Caco-2 (cell line): ENCODE measurements at regions of chr20 and their contacts with region 1.

Region 1: DNA sequence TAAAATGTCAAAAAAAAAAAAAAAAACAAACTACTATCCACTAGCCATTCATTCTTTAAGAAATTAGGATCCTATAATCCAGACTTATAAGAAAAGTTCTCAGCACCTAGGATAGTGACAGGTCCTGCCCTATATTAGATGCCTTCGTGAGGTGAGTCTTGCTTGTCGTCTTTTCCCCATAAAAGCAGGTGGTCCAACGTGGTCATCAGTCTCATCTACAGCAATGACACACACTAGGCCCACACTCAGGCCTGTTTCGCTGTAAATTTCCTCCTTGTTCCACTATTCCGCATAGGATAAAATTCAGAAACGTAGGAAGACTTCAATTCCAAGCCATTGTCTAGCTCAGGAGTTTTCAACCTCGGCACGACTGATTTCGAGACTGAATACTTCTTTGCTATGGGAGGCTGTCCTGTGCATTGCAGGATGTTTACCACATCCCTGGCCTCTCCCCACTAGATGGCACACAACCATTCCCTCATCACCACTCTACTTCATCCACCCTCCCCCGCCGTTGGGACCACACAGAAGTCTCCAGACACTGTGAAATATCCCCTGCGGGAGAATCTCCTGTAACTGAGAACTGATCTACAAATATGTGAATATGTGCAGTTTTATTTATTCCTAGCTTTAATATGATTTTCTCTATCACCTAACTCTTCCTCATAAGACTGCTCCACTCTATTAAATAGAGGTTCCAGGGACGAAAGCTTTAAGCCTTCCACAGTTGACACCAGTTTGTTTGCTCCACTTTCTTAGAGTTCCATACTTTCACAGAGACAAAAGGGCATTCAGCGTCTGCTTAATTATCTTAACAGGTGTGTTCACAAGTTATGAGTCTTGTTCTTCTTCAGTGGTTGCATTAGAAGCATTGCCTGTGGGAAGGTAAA is 346.3 kb downstream of the BMP2 start:
- DNase-seq: peak; percentile 75 to 78
- H3K4me3 ChIP-seq: no peak overlapping the region
- H3K4me3 Mint-ChIP-seq: peak overlapping the region; percentile 47
- H3K27ac Mint-ChIP-seq: no peak overlapping the region
- H3K4me1 ChIP-seq: peaks cover 7% of the 10 kb centered on the region; the same call in 1 of the 2 replicates
- H3K4me1 Mint-ChIP-seq: peaks cover 10% of the 10 kb centered on the region
- H3K27me3 ChIP-seq: no peaks in the 10 kb centered on the region
- H3K27me3 Mint-ChIP-seq: no peaks in the 10 kb centered on the region
- CTCF ChIP-seq: peak; percentile 73 to 89

Region 2: GRCh38 chr20:6956574-6956973 is 157.2 kb before region 1 on chr20:
- CTCF ChIA-PET with region 1: no interaction called
- POLR2A ChIA-PET with region 1: no interaction called
- intact Hi-C with region 1: no loop called
- DNase-seq: no peak
- H3K4me3 ChIP-seq: no peak overlapping the region
- H3K4me3 Mint-ChIP-seq: no peak overlapping the region
- H3K27ac Mint-ChIP-seq: no peak overlapping the region
- H3K4me1 ChIP-seq: peaks cover 17% of the 10 kb centered on the region
- H3K4me1 Mint-ChIP-seq: peaks cover 15% of the 10 kb centered on the region
- H3K27me3 ChIP-seq: no peaks in the 10 kb centered on the region
- H3K27me3 Mint-ChIP-seq: no peaks in the 10 kb centered on the region
- CTCF ChIP-seq: no peak

Region 3: DNA sequence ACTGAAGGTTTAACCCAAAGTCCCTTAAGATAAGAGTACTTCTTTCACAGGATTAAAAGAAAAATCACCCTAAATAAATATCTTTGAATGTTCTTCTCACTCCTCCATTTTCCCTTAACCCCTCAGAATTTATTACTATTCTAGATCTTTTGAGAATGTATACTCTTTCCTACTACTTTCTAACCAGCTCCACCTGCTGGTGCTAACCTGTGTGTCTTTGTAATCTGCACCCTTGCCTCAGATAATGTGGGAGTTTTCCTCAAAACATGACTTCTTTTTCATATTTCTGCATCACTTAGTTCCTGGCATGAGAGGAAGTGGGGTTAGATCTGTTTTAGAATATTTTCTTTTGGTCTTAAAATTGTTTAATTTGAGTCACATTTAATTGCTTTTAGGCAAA is 47.9 kb after region 1 on chr20:
- CTCF ChIA-PET with region 1: interaction called, 5 read pairs
- POLR2A ChIA-PET with region 1: no interaction called
- intact Hi-C with region 1: loop called (anchors 2 kb)
- DNase-seq: peak; percentile 48 to 53
- H3K4me3 ChIP-seq: no peak overlapping the region
- H3K4me3 Mint-ChIP-seq: no peak overlapping the region
- H3K27ac Mint-ChIP-seq: no peak overlapping the region
- H3K4me1 ChIP-seq: 0 out of 2 replicates have a peak, but pooled peaks cover 7% of the 10 kb centered on the region
- H3K4me1 Mint-ChIP-seq: peaks cover 17% of the 10 kb centered on the region
- H3K27me3 ChIP-seq: no peaks in the 10 kb centered on the region
- H3K27me3 Mint-ChIP-seq: no peaks in the 10 kb centered on the region
- CTCF ChIP-seq: peak; percentile 58 to 80

Region 4: DNA sequence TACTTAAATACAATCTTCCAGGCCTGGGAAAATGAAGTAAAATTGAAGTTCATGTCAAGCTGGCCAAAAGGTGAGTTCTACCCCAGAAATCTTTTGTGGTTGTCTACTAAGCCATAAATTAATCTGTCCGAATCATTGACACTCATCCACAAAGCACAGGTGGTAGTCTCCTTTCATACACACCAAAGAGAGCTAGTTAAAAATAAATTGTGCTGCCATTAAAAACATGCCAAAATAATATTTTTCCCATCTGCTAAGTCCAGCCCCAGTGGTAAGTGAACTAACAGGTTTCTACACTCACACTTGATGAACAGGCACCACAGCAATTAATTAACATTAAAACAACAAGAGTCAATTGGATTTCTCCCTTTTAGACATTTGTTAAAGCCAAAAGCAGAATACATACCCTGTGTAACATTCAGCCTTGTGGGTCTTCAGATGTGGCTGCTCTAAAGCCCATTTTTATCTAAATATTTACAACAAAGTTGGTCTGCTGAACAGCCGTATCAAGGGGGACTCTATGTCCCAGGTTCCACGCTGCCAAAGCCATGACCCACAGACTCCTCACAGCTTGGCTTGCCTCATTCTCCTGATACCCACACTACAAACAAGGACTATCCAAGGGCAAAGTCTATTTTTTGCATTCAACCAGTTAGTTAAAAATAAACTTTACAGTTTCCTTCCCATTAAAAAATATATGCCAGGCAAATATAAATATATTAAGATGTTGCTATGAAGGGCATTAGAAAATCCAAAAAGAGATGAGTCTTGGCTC is 144.1 kb after region 1 on chr20:
- CTCF ChIA-PET with region 1: no interaction called
- POLR2A ChIA-PET with region 1: no interaction called
- intact Hi-C with region 1: no loop called
- DNase-seq: no peak
- H3K4me3 ChIP-seq: no peak overlapping the region
- H3K4me3 Mint-ChIP-seq: no peak overlapping the region
- H3K27ac Mint-ChIP-seq: no peak overlapping the region
- H3K4me1 ChIP-seq: peaks cover 36% of the 10 kb centered on the region
- H3K4me1 Mint-ChIP-seq: peaks cover 20% of the 10 kb centered on the region
- H3K27me3 ChIP-seq: no peaks in the 10 kb centered on the region
- H3K27me3 Mint-ChIP-seq: no peaks in the 10 kb centered on the region
- CTCF ChIP-seq: no peak

Region 5: GRCh38 chr20:7272512-7272911 is 158.7 kb after region 1 on chr20:
- CTCF ChIA-PET with region 1: interaction called, 7 read pairs
- POLR2A ChIA-PET with region 1: no interaction called
- intact Hi-C with region 1: loop called (anchors 2 kb)
- DNase-seq: peak in 1 of 2 experiments; percentile 38
- H3K4me3 ChIP-seq: no peak overlapping the region
- H3K4me3 Mint-ChIP-seq: no peak overlapping the region
- H3K27ac Mint-ChIP-seq: no peak overlapping the region
- H3K4me1 ChIP-seq: no peaks in the 10 kb centered on the region
- H3K4me1 Mint-ChIP-seq: no peaks in the 10 kb centered on the region
- H3K27me3 ChIP-seq: no peaks in the 10 kb centered on the region
- H3K27me3 Mint-ChIP-seq: no peaks in the 10 kb centered on the region
- CTCF ChIP-seq: peak; percentile 47 to 69

Region 6: DNA sequence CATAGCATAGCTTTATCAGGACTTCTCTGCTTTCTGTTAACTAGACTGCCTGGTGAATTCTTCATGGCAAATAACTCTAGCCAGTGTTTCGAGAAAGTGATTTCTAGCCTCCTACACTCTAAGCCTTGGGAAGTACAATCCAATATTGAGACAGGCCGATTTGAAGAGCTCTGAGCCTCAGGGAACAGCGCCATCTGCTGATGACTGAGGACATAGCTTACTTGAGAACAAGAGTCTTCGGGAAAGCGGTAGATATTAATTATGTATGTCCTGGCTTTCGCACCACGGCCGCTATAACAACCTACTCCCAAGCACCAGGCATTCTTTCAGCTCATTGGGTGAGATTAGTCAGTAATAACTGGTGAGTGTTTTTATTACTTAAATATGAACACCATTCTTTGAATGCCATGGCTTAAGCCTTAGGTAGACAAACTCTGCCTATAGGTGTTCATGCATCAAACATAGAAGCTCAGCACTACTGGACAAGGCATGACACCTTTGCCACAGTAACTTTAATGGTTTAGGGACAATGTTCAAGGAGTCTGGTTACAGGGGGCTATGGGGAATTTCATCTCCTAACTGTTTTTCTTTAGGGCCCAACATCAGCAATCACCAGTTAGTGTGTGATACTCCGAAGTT is 172.2 kb after region 1 on chr20:
- CTCF ChIA-PET with region 1: interaction called, 12 read pairs
- POLR2A ChIA-PET with region 1: no interaction called
- intact Hi-C with region 1: loop called (anchors 2 kb)
- DNase-seq: peak; percentile 75 to 77
- H3K4me3 ChIP-seq: no peak overlapping the region
- H3K4me3 Mint-ChIP-seq: no peak overlapping the region
- H3K27ac Mint-ChIP-seq: no peak overlapping the region
- H3K4me1 ChIP-seq: 0 out of 2 replicates have a peak, but pooled peaks cover under 1% of the 10 kb centered on the region
- H3K4me1 Mint-ChIP-seq: no peaks in the 10 kb centered on the region
- H3K27me3 ChIP-seq: no peaks in the 10 kb centered on the region
- H3K27me3 Mint-ChIP-seq: no peaks in the 10 kb centered on the region
- CTCF ChIP-seq: peak; percentile 78 to 94

Region 7: DNA sequence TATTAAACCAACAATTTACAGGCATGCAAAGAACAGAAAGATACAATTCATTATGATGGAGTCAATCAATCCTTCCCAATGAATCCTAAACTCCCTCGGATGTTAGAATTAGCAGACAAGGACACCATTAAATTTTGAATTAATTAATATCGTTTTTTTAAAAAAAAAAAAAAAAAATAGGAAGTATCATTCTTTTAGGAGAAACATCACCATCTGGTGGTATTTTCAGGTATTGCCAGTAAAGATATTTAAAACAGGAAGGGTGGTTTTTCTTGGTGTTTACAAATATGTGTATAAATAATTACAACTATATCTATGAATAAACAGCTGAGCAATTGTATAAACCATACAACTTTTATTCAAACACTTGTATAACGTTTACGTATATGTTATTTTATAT is 262.1 kb after region 1 on chr20:
- CTCF ChIA-PET with region 1: no interaction called
- POLR2A ChIA-PET with region 1: no interaction called
- intact Hi-C with region 1: loop called (anchors 2 kb)
- DNase-seq: peak in 1 of 2 experiments; percentile 43
- H3K4me3 ChIP-seq: no peak overlapping the region
- H3K4me3 Mint-ChIP-seq: no peak overlapping the region
- H3K27ac Mint-ChIP-seq: no peak overlapping the region
- H3K4me1 ChIP-seq: no peaks in the 10 kb centered on the region
- H3K4me1 Mint-ChIP-seq: no peaks in the 10 kb centered on the region
- H3K27me3 ChIP-seq: no peaks in the 10 kb centered on the region
- H3K27me3 Mint-ChIP-seq: peaks cover 3% of the 10 kb centered on the region
- CTCF ChIP-seq: peak; percentile 55 to 62

Region 8: DNA sequence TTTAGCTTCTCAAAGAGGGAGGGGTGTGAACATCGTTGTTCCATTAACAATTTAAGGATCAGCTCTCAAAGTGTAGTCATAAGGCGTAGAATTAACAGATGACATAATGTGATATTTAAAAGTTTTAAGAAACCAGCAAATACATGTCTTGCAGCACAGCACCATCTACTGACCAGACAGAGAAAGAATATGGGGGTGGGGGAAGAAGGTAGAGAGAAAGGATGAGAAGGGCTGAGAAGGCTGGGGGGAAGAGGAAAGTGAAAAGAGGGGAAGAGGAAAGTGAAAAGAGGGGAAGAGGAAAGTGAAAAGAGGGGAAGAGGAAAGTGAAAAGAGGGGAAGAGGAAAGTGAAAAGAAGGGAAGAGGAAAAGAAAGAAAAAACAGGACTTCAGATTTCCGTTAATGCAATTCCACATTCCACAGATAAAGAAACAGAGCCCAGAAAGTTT is 745.6 kb after region 1 on chr20:
- CTCF ChIA-PET with region 1: no interaction called
- POLR2A ChIA-PET with region 1: no interaction called
- intact Hi-C with region 1: loop called (anchors 2 kb)
- DNase-seq: peak in 1 of 2 experiments; percentile 31
- H3K4me3 ChIP-seq: no peak overlapping the region
- H3K4me3 Mint-ChIP-seq: no peak overlapping the region
- H3K27ac Mint-ChIP-seq: no peak overlapping the region
- H3K4me1 ChIP-seq: no peaks in the 10 kb centered on the region
- H3K4me1 Mint-ChIP-seq: no peaks in the 10 kb centered on the region
- H3K27me3 ChIP-seq: no peaks in the 10 kb centered on the region
- H3K27me3 Mint-ChIP-seq: peaks cover 10% of the 10 kb centered on the region
- CTCF ChIP-seq: peak; percentile 38 to 75